ENCODE measurements at regions of chr7 and their contacts with region 1.

Region 1: GRCh38 chr7:143229054-143229790 is 7.4 kb downstream of the TAS2R40 start:
- DNase-seq: no peak
- H3K4me3 ChIP-seq: no peak overlapping the region
- H3K4me1 ChIP-seq: no peaks in the 10 kb centered on the region
- H3K27me3 ChIP-seq: peaks cover 3% of the 10 kb centered on the region; the same call in 1 of the 2 replicates

Region 2: DNA sequence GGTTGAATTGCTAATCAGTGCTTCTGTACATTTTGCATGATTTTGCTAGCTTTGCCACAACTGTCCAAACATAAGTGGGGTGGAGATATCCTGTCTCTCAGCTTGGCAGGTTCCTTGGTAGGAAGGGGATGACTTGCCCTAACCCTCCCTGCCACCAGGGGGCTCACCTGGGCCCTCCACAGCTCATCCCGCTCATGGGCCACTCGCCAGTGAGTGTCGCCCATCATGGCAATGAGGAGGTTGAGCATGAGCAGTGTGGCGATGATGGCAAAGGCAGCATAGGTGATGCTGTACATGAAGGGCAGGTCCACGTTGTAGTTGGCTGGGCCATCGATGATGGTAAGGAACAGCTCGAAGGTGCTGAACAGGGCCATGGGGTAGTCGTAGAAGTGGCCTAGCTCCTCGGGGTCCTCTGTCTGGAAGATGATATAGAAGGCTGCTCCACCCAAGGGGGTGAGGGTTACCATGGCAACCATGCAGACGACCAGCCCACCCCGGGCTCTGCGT is 355.9 kb before region 1 on chr7:
- in situ Hi-C with region 1: loop called (anchors 10 kb)
- DNase-seq: peak; percentile 4 to 61
- H3K4me3 ChIP-seq: no peak overlapping the region
- H3K4me1 ChIP-seq: no peaks in the 10 kb centered on the region
- H3K27me3 ChIP-seq: no peaks in the 10 kb centered on the region